ENCODE measurements at regions of chrX and their contacts with region 1.

Region 1: DNA sequence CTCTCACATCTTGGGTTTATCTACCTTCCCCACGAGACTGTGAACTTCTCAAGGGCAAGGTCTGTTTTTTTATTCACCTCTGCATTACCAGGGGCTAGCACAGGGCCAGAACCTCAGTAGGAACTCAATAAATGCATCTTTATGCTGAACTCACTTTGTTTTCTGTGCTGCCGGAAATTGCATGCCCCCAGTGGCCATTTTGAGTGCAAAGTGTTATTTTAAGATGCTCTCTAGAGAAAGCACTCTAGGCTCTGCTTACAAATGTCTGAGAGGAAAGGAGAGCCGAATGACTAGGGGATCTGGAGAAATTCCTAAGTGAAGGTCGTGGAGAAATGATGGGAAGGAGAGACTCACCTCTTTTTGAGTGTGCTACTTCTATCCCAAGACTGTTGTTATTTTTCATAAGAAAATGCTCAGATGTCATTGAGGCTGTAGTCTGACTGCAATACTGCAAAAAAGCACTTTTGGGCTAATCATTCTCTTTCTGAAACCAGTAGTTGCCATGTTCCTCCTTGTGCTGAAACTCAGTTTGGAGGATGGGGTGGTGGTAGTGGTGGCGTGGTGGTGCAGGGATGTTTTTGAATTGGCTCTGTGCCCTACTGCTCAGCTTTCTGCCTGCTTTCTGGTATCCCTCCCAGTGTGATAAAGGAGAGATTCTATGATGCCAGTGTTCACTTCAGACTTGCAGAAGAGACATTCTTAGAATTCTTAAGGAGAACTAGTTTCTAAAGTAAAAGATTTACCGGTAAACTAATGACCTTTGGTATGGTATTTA is 41.3 kb downstream of the DOCK11 start:
- DNase-seq: peak; percentile 1 to 75 (median 56)
- ATAC-seq: peak; percentile 87
- H3K4me3 ChIP-seq: peak overlapping the region in 1 of 2 experiments; percentile 9
- H3K4me3 Mint-ChIP-seq: peak overlapping the region; percentile 35
- H3K27ac ChIP-seq: peak overlapping the region in 1 of 2 experiments; percentile 59
- H3K27ac Mint-ChIP-seq: peak overlapping the region; percentile 80
- H3K4me1 ChIP-seq: peaks cover 57% of the 10 kb centered on the region
- H3K4me1 Mint-ChIP-seq: peaks cover 64% of the 10 kb centered on the region
- H3K27me3 ChIP-seq: no peaks in the 10 kb centered on the region
- H3K27me3 Mint-ChIP-seq: no peaks in the 10 kb centered on the region
- CTCF ChIP-seq: peak; percentile 53

Region 2: DNA sequence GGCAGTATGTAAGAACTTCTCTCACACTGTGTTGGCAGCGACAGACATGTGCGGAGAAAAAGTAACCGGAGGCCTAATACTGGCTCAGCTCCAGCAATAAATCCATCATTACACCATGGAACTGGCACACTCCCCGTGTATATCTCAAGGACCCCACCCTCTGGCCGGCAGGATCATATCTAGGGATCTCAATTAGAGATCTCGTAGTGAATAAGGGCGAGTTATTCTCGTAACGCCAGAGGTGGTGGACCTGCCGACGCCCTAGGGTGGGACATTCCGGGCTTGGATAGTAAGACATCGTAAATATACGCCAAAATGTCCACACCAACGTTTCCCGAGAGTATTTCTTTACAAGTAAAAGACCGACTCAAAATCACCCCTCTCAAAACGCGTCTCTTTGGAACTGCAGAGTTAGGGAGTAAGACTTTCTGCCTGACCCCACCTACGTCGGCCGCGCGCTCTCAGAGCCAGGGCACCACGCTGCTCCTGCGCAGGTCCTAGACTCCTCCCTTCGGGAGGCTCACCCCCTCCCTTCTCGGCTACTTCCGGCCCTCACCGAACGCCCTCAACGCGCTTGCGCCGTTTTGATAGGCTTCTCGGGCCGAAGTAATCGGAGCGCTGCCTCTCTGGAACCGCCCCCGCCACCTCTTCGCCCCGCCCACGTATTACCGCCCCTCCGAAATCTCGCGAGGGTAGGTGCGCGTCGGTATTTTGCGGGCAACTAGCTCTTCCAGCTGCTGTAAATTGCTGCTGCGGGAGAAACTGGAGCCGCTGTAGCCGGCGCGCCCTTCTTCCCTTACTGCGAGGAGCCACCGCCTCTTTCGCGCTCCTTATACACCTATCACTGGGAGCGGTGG is 191.2 kb before region 1 on chrX and contains the start of gene WDR44:
- CTCF ChIA-PET with region 1: no interaction called
- POLR2A ChIA-PET with region 1: no interaction called
- intact Hi-C with region 1: loop called in 1 of 2 experiments (anchors 5 kb)
- DNase-seq: peak; percentile 86 to 96 (median 90)
- ATAC-seq: peak; percentile 90
- H3K4me3 ChIP-seq: peak within 1 kb of the TSS; percentile 70 to 87
- H3K4me3 Mint-ChIP-seq: peak within 1 kb of the TSS; percentile 98
- H3K27ac ChIP-seq: peak within 1 kb of the TSS; percentile 87 to 89
- H3K27ac Mint-ChIP-seq: peak within 1 kb of the TSS; percentile 97
- H3K4me1 ChIP-seq: peaks cover 26% of the 10 kb centered on the region
- H3K4me1 Mint-ChIP-seq: peaks cover 34% of the 10 kb centered on the region
- H3K27me3 ChIP-seq: no peaks in the 10 kb centered on the region
- H3K27me3 Mint-ChIP-seq: no peaks in the 10 kb centered on the region
- CTCF ChIP-seq: no peak
- total RNA-seq, gene WDR44: 9.9 to 11.2 TPM

Region 3: GRCh38 chrX:118360429-118361125 is 176.3 kb before region 1 on chrX:
- CTCF ChIA-PET with region 1: no interaction called
- POLR2A ChIA-PET with region 1: no interaction called
- intact Hi-C with region 1: no loop called
- DNase-seq: no peak
- ATAC-seq: no peak
- H3K4me3 ChIP-seq: no peak overlapping the region
- H3K4me3 Mint-ChIP-seq: no peak overlapping the region
- H3K27ac ChIP-seq: no peak overlapping the region
- H3K27ac Mint-ChIP-seq: no peak overlapping the region
- H3K4me1 ChIP-seq: peaks cover 2% of the 10 kb centered on the region
- H3K4me1 Mint-ChIP-seq: peaks cover 54% of the 10 kb centered on the region
- H3K27me3 ChIP-seq: no peaks in the 10 kb centered on the region
- H3K27me3 Mint-ChIP-seq: no peaks in the 10 kb centered on the region
- CTCF ChIP-seq: no peak

Region 4: DNA sequence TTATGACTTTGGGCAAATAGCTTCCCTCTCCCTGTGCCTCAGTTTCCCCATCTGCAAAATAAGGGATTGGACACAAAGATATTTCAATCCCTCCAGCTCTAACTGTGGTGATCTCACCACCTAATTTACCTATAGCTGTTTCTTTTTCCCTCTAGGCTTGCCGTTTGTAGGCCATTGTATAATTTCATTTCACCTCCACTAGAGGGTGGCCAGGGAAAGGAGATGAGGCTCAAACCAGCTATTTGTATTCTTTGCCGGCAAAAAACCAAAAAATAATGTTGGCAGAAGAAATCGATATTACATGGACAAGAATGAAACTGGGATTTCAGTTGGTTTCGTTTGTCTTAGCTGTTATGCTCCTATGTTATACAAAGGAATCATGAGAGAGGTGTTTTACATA is 77.4 kb before region 1 on chrX:
- CTCF ChIA-PET with region 1: interaction called, 5 read pairs
- POLR2A ChIA-PET with region 1: no interaction called
- intact Hi-C with region 1: loop called in 1 of 2 experiments (anchors 5 kb)
- DNase-seq: peak in 4 of 9 experiments; percentile 18 to 65 (median 37)
- ATAC-seq: peak; percentile 72
- H3K4me3 ChIP-seq: no peak overlapping the region
- H3K4me3 Mint-ChIP-seq: no peak overlapping the region
- H3K27ac ChIP-seq: no peak overlapping the region
- H3K27ac Mint-ChIP-seq: no peak overlapping the region
- H3K4me1 ChIP-seq: no peaks in the 10 kb centered on the region
- H3K4me1 Mint-ChIP-seq: peaks cover 4% of the 10 kb centered on the region
- H3K27me3 ChIP-seq: no peaks in the 10 kb centered on the region
- H3K27me3 Mint-ChIP-seq: no peaks in the 10 kb centered on the region
- CTCF ChIP-seq: peak; percentile 45

Region 5: GRCh38 chrX:118495061-118495921 is 41.6 kb before region 1 on chrX and contains the start of gene DOCK11:
- CTCF ChIA-PET with region 1: interaction called, 28 read pairs
- POLR2A ChIA-PET with region 1: interaction called, 13 read pairs
- intact Hi-C with region 1: loop called (anchors 2 kb)
- DNase-seq: peak; percentile 48 to 92 (median 80)
- ATAC-seq: peak; percentile 69
- H3K4me3 ChIP-seq: peak within 1 kb of the TSS; percentile 71 to 75
- H3K4me3 Mint-ChIP-seq: peak within 1 kb of the TSS; percentile 98
- H3K27ac ChIP-seq: peak within 1 kb of the TSS; percentile 82
- H3K27ac Mint-ChIP-seq: peak within 1 kb of the TSS; percentile 99
- H3K4me1 ChIP-seq: peaks cover 31% of the 10 kb centered on the region
- H3K4me1 Mint-ChIP-seq: peaks cover 26% of the 10 kb centered on the region
- H3K27me3 ChIP-seq: no peaks in the 10 kb centered on the region
- H3K27me3 Mint-ChIP-seq: no peaks in the 10 kb centered on the region
- CTCF ChIP-seq: no peak
- total RNA-seq, gene DOCK11: 52.8 to 57.9 TPM

Region 6: DNA sequence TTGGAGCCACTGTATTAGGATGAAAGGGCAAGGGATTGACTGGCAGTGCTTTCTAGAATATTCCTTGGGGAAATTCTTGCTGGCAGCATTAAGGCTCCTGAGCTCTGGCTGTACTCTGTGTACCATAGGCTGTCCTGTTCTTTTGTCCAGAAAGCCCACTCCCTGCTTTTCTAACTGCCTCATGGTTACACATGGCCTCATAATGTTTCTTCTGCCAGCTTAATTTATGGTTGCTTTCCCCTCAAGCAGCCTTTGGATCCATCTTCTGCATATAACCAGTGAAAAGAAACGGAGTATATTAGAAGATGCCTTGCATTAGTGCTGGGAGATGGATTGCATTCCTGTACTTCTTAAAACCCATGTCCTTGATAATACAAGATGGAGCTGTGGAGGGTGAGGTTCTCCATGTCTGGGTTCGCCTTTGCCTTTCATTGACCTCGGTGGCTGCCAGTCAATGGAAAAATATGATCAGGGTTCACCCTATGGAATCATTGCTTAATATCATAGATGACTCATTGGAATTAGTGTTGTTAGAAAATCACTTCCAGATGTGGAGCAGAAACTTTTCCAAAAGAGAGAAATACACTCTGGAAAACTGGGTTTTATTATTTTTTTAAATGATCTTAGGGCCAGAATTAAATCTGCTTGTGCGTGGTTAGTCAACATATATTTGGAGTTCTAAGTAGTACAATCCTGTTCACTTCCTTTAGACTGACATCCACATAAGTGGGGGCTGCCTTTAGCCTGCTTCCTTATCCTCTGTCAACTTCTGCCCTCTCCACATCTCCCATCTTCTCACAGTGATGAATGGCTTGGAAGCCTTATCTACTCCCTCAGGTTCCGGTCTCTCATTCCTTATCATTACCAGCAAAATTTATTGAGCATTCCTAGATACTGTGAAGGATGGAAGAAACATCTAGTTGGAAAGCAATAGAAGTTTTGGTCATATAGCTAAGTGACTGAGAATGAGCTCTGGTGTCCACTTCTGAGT is 16.4 kb before region 1 on chrX:
- CTCF ChIA-PET with region 1: interaction called, 3 read pairs
- POLR2A ChIA-PET with region 1: interaction called, 3 read pairs
- intact Hi-C with region 1: loop called in 1 of 2 experiments (anchors 2 kb)
- DNase-seq: no peak
- ATAC-seq: no peak
- H3K4me3 ChIP-seq: no peak overlapping the region
- H3K4me3 Mint-ChIP-seq: no peak overlapping the region
- H3K27ac ChIP-seq: peak overlapping the region in 1 of 2 experiments; percentile 30
- H3K27ac Mint-ChIP-seq: peak overlapping the region; percentile 79
- H3K4me1 ChIP-seq: peaks cover 63% of the 10 kb centered on the region
- H3K4me1 Mint-ChIP-seq: peaks cover 69% of the 10 kb centered on the region
- H3K27me3 ChIP-seq: no peaks in the 10 kb centered on the region
- H3K27me3 Mint-ChIP-seq: no peaks in the 10 kb centered on the region
- CTCF ChIP-seq: no peak

Region 7: DNA sequence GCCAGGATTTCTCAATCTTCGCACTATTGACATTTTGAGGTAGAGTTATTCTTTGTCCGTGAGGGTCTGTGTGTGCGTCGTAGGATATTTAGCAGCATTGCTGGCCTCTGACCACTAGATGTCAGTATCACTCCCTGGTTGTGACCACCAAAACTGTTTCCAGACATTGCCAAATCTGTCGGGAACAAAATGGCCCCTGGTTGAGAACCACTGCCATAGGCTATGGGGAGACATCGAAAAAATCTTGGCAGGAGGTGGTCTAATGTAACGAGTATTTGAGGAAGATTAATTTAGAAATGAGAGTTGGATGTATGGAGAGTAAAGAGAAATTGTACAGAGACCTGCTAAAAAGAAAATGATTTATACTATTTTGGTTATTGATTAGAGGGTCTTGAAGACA is 67.1 kb after region 1 on chrX:
- CTCF ChIA-PET with region 1: interaction called, 7 read pairs
- POLR2A ChIA-PET with region 1: interaction called, 3 read pairs
- intact Hi-C with region 1: loop called in 1 of 2 experiments (anchors 5 kb)
- DNase-seq: peak in 7 of 9 experiments; percentile 11 to 67 (median 29)
- ATAC-seq: peak; percentile 77
- H3K4me3 ChIP-seq: no peak overlapping the region
- H3K4me3 Mint-ChIP-seq: no peak overlapping the region
- H3K27ac ChIP-seq: no peak overlapping the region
- H3K27ac Mint-ChIP-seq: peak overlapping the region; percentile 85
- H3K4me1 ChIP-seq: no peaks in the 10 kb centered on the region
- H3K4me1 Mint-ChIP-seq: peaks cover 26% of the 10 kb centered on the region
- H3K27me3 ChIP-seq: no peaks in the 10 kb centered on the region
- H3K27me3 Mint-ChIP-seq: no peaks in the 10 kb centered on the region
- CTCF ChIP-seq: peak; percentile 67

Measured in CD8-positive, alpha-beta T cell (primary cell).